GM12878 (cell line): ENCODE measurements at regions of chr17 and their contacts with region 1.

Region 1: DNA sequence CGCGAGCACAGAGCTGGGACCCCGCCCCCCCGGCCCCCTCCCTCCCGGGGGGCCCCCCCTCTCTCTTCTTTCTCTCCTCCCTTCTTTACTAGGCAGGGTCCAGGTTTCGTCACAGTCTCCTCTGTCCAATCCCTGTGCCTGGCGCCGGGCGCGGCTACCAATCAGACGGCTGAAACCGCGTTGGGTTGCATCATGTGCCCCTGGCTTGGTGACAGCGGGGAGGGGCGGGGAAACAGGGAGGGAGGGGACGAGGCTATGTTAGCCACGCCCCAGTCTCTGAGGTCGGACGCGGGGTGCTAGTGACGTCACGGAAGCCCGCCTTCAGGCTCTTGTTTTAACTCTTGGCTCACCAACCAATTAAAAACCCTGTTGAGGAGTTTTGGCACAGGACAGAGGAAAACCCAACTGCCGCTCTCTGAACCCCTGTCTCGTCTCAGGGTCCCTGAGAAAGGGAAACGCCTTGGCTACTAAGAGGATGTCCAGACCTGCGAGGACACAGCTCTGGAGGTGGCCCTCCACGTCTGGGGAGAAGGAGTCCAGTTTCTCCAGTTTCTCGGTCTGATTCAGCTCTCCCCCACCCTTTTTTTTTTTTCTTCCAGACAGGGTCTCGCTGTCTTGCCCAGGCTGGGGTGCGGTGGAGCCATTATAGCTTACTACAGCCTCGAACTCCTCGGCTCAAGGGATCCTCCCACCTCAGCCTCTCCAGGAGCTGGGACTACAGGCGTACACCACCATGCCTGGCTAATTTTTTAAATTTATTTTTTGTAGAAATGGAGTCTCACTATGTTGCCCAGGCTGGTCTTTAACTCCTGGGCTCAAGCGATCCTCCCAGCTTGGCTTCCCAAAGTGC is 439 bp upstream of the PLEKHH3 start:
- DNase-seq: peak; percentile 99
- ATAC-seq: peak; percentile 71
- H3K4me3 ChIP-seq: peak overlapping the region; percentile 98
- H3K27ac ChIP-seq: peak overlapping the region; percentile 93
- H3K4me1 ChIP-seq: peaks cover 19% of the 10 kb centered on the region
- H3K27me3 ChIP-seq: no peaks in the 10 kb centered on the region
- CTCF ChIP-seq: no peak
- EP300 ChIP-seq: peak in 1 of 2 experiments; percentile 12; a peak in 1 of 4 replicates
- POLR2A ChIP-seq: no peak
- RAD21 ChIP-seq: no peak

Region 2: DNA sequence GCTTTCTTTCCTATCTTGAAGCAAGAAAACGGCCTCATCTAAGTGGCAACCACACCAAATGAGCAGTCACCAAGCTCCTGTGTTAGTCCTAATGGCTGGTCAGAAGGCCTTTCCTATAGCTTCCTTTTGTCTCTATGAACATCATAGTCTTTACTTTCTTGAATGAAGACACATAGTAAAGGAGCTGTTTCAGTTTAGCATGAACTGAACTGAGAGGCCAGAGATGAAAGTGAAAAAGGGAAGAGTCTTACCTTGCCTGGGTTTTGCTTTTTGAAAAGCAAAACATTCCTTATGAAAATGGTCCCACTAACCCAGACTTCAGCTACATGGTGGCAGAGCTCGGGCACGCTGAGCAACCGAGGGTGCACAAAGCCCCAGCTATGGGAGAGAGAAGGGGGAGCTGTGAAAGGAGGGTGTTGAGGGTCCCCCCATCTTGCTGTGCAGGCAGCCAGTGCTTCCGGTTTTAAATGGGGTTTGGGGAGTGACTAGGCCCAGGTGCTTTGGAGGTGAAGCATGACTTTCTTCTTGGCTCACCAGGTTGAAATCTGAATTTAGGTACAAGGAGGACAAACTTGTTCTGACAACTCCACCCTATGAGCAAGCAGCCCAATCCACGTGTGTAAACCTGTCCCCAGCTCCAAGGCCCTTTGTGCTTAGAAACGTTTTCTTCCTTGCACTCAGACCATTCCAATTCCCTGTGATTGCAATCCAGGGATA is 90.6 kb before region 1 on chr17:
- CTCF ChIA-PET with region 1: interaction called, 239 read pairs
- POLR2A ChIA-PET with region 1: interaction called, 120 read pairs
- RAD21 ChIA-PET with region 1: interaction called, 10 read pairs
- SMC1A ChIA-PET with region 1: interaction called, 14 read pairs
- in situ Hi-C with region 1: no loop called
- intact Hi-C with region 1: no loop called
- DNase-seq: no peak
- ATAC-seq: peak; percentile 94
- H3K4me3 ChIP-seq: peak overlapping the region; percentile 41; the same call in 1 of the 2 replicates
- H3K27ac ChIP-seq: peak overlapping the region; percentile 60
- H3K4me1 ChIP-seq: peaks cover 32% of the 10 kb centered on the region
- H3K27me3 ChIP-seq: no peaks in the 10 kb centered on the region
- CTCF ChIP-seq: no peak
- EP300 ChIP-seq: no peak
- POLR2A ChIP-seq: peak; percentile 39; the same call in 1 of the 2 replicates
- RAD21 ChIP-seq: no peak

Region 3: GRCh38 chr17:42609182-42609813 is 67.9 kb before region 1 on chr17 and contains the starts of genes RETREG3 and TUBG1:
- CTCF ChIA-PET with region 1: interaction called, 28 read pairs
- POLR2A ChIA-PET with region 1: interaction called, 70 read pairs
- RAD21 ChIA-PET with region 1: interaction called, 43 read pairs
- SMC1A ChIA-PET with region 1: interaction called, 85 read pairs
- in situ Hi-C with region 1: no loop called
- intact Hi-C with region 1: loop called (anchors 1 kb)
- DNase-seq: peak; percentile 98
- ATAC-seq: peak; percentile 90
- H3K4me3 ChIP-seq: peak within 1 kb of the TSS; percentile 98
- H3K27ac ChIP-seq: peak within 1 kb of the TSS; percentile 90
- H3K4me1 ChIP-seq: no peaks in the 10 kb centered on the region; the same call in 1 of the 2 replicates
- H3K27me3 ChIP-seq: no peaks in the 10 kb centered on the region
- CTCF ChIP-seq: peak; percentile 16 to 24 (median 20); a peak in 2 of 6 replicates
- EP300 ChIP-seq: no peak
- POLR2A ChIP-seq: peak; percentile 91
- RAD21 ChIP-seq: no peak
- polyA plus RNA-seq, gene RETREG3: 7.0 to 9.0 TPM
- polyA plus RNA-seq, gene TUBG1: 40.0 to 40.3 TPM

Region 4: GRCh38 chr17:42623732-42624596 is 53.3 kb before region 1 on chr17:
- CTCF ChIA-PET with region 1: interaction called, 134 read pairs
- POLR2A ChIA-PET with region 1: interaction called, 15 read pairs
- RAD21 ChIA-PET with region 1: interaction called, 41 read pairs
- SMC1A ChIA-PET with region 1: interaction called, 60 read pairs
- in situ Hi-C with region 1: no loop called
- intact Hi-C with region 1: loop called (anchors 2 kb)
- DNase-seq: no peak
- ATAC-seq: peak; percentile 40
- H3K4me3 ChIP-seq: no peak overlapping the region
- H3K27ac ChIP-seq: no peak overlapping the region
- H3K4me1 ChIP-seq: peaks cover 22% of the 10 kb centered on the region
- H3K27me3 ChIP-seq: no peaks in the 10 kb centered on the region
- CTCF ChIP-seq: no peak
- EP300 ChIP-seq: no peak
- POLR2A ChIP-seq: no peak
- RAD21 ChIP-seq: no peak

Region 5: DNA sequence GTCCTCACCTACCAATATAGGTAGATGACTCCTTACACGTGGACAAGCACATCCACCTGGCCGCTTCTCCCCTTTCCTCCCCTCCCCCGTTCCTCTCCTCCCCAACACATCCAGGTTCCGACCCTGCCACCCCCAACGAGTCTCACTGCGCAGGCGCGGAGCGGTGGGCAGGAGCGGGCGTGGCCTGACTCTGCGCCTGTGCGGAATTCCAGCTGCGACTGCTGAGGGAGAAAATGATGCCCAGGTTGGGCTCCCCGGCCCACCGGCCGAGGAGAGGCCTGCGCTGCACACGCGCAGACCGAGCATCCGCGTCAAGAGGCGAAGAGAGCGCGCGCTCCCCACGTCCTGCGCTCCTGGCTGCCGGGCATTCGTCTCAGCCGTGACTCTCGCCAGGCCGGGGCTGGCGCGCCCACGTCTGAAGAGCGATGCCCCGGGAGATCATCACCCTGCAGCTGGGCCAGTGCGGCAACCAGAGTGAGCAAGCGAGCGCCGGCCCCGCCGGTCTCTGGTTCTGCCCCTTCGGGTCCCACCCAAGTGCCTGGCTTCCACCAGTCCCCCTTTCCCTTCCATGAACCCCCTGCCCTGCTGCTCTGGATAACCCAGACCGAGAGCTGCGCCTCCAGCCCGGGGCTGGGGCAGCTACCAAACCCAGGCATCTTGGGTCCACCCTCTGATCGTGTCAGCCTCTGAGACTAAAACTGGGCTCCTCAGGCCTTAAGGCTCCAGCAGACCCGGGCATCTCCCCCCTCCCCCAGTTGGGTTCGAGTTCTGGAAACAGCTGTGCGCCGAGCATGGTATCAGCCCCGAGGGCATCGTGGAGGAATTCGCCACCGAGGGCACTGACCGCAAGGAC is 17.9 kb before region 1 on chr17 and contains the start of gene TUBG2:
- CTCF ChIA-PET with region 1: interaction called, 27 read pairs
- POLR2A ChIA-PET with region 1: interaction called, 29 read pairs
- RAD21 ChIA-PET with region 1: interaction called, 10 read pairs
- SMC1A ChIA-PET with region 1: interaction called, 9 read pairs
- in situ Hi-C with region 1: no loop called
- intact Hi-C with region 1: no loop called
- DNase-seq: no peak
- ATAC-seq: peak; percentile 73
- H3K4me3 ChIP-seq: peak within 1 kb of the TSS; percentile 77
- H3K27ac ChIP-seq: peak within 1 kb of the TSS; percentile 42; the same call in 1 of the 2 replicates
- H3K4me1 ChIP-seq: peaks cover 33% of the 10 kb centered on the region
- H3K27me3 ChIP-seq: no peaks in the 10 kb centered on the region
- CTCF ChIP-seq: no peak
- EP300 ChIP-seq: no peak
- POLR2A ChIP-seq: peak; percentile 73
- RAD21 ChIP-seq: no peak
- polyA plus RNA-seq, gene TUBG2: 1.2 to 1.8 TPM

Region 6: GRCh38 chr17:42760652-42761581 is 83.7 kb after region 1 on chr17 and contains the start of gene RAMP2:
- CTCF ChIA-PET with region 1: interaction called, 5 read pairs
- POLR2A ChIA-PET with region 1: interaction called, 4 read pairs
- RAD21 ChIA-PET with region 1: interaction called, 5 read pairs
- SMC1A ChIA-PET with region 1: interaction called, 8 read pairs
- in situ Hi-C with region 1: no loop called
- intact Hi-C with region 1: loop called (anchors 5 kb)
- DNase-seq: no peak
- ATAC-seq: peak; percentile 36
- H3K4me3 ChIP-seq: peak within 1 kb of the TSS; percentile 37; the same call in 1 of the 2 replicates
- H3K27ac ChIP-seq: no peak within 1 kb of the TSS
- H3K4me1 ChIP-seq: peaks cover 17% of the 10 kb centered on the region
- H3K27me3 ChIP-seq: no peaks in the 10 kb centered on the region
- CTCF ChIP-seq: no peak
- EP300 ChIP-seq: no peak
- POLR2A ChIP-seq: no peak
- RAD21 ChIP-seq: no peak
- polyA plus RNA-seq, gene RAMP2: 0.20 to 0.21 TPM

Region 7: GRCh38 chr17:43079578-43080302 is 402.5 kb after region 1 on chr17:
- CTCF ChIA-PET with region 1: no interaction called
- POLR2A ChIA-PET with region 1: no interaction called
- RAD21 ChIA-PET with region 1: no interaction called
- SMC1A ChIA-PET with region 1: no interaction called
- in situ Hi-C with region 1: no loop called
- intact Hi-C with region 1: no loop called
- DNase-seq: no peak
- ATAC-seq: no peak
- H3K4me3 ChIP-seq: no peak overlapping the region
- H3K27ac ChIP-seq: no peak overlapping the region
- H3K4me1 ChIP-seq: no peaks in the 10 kb centered on the region
- H3K27me3 ChIP-seq: no peaks in the 10 kb centered on the region
- CTCF ChIP-seq: no peak
- EP300 ChIP-seq: no peak
- POLR2A ChIP-seq: no peak
- RAD21 ChIP-seq: no peak